ENCODE measurements at regions of chr12 and their contacts with region 1.

Region 1: DNA sequence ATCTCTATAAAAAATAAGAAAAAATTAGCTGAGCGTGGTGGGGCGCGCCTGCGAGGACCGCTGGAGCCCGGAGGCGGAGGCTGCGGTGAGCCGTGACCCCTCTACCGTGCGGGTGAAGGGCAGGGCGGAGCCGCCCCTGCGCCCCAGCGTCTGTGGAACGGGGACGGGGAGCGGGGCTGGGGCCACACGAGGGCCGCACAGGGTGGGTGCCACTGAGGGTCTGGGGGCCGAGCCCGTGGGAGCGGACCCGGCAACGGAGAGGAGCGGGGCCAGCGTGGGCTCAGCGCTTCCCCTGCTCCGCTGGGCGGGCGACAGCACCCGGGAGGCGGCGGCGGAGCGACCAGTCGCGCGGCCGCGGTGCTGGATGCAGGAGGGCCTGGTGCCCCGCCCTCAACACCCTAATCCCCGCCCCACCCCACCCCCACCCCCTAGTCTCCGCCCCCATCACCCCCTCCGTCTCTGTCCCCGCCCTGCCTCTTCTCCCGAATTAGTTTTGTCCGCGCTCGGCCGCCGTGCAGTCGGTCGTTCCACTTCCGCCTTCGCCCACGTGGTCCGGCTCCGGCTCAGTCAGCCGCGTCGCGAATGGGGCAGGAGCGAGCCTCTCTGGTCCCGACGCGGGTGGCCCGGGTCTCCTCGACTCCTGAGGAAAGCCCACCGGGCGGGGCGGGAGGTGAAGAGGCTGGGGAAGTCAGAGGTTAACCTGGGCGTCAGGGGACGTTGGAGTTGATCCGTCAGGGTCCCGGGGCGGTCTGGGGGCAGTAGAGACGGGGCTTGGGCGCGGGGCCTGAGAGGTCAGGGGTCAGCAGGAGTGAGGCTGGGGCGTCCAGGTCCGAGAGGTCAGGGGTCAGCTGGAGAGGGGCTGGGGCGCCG is at the start of gene PUS1:
- DNase-seq: peak; percentile 85 to 92
- H3K4me3 ChIP-seq: peak within 1 kb of the TSS; percentile 98
- H3K27ac ChIP-seq: peak within 1 kb of the TSS; percentile 60; the same call in 1 of the 2 replicates
- H3K4me1 ChIP-seq: peaks cover 8% of the 10 kb centered on the region
- H3K27me3 ChIP-seq: no peaks in the 10 kb centered on the region
- CTCF ChIP-seq: no peak
- total RNA-seq, gene PUS1: 36.4 and 37.0 TPM in 2 replicates

Region 2: DNA sequence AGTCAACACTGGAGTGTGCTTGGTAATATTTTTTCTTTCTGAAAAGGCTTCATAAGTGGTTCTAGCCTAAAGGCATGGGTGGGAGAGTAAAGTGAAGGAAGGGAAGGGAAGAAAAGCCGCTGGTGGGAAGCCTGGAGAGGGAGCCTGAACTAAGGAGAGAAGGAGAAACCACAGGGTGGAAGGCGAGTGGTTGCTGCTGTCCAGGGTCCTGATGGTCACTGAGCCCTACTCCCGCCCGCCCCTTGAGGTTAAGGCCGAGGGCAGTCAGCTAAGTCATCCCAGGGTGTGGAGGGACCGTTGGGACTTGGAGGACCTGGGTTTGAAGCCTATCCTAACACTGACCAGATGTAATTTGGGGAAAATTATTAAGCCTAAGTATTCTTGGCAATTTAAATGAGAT is 1402.1 kb before region 1 on chr12:
- CTCF ChIA-PET with region 1: no interaction called
- POLR2A ChIA-PET with region 1: no interaction called
- intact Hi-C with region 1: no loop called
- DNase-seq: peak in 1 of 2 experiments; percentile 14
- H3K4me3 ChIP-seq: no peak overlapping the region
- H3K27ac ChIP-seq: no peak overlapping the region
- H3K4me1 ChIP-seq: no peaks in the 10 kb centered on the region
- H3K27me3 ChIP-seq: peaks cover 14% of the 10 kb centered on the region
- CTCF ChIP-seq: no peak

Region 3: GRCh38 chr12:131825146-131825892 is 103.6 kb before region 1 on chr12:
- CTCF ChIA-PET with region 1: no interaction called
- POLR2A ChIA-PET with region 1: no interaction called
- intact Hi-C with region 1: no loop called
- DNase-seq: no peak
- H3K4me3 ChIP-seq: no peak overlapping the region
- H3K27ac ChIP-seq: no peak overlapping the region
- H3K4me1 ChIP-seq: peaks cover 7% of the 10 kb centered on the region; the same call in 1 of the 2 replicates
- H3K27me3 ChIP-seq: peaks cover 18% of the 10 kb centered on the region
- CTCF ChIP-seq: no peak

Region 4: GRCh38 chr12:131844656-131845055 is 84.3 kb before region 1 on chr12:
- CTCF ChIA-PET with region 1: no interaction called
- POLR2A ChIA-PET with region 1: no interaction called
- intact Hi-C with region 1: no loop called
- DNase-seq: no peak
- H3K4me3 ChIP-seq: no peak overlapping the region
- H3K27ac ChIP-seq: no peak overlapping the region
- H3K4me1 ChIP-seq: no peaks in the 10 kb centered on the region
- H3K27me3 ChIP-seq: peaks cover 3% of the 10 kb centered on the region; the same call in 1 of the 2 replicates
- CTCF ChIP-seq: no peak

Region 5: GRCh38 chr12:131882779-131883520 is 46.0 kb before region 1 on chr12:
- CTCF ChIA-PET with region 1: no interaction called
- POLR2A ChIA-PET with region 1: interaction called, 53 read pairs
- intact Hi-C with region 1: no loop called
- DNase-seq: peak; percentile 47 to 54
- H3K4me3 ChIP-seq: no peak overlapping the region
- H3K27ac ChIP-seq: peak overlapping the region; percentile 35; the same call in 1 of the 2 replicates
- H3K4me1 ChIP-seq: peaks cover 46% of the 10 kb centered on the region
- H3K27me3 ChIP-seq: no peaks in the 10 kb centered on the region
- CTCF ChIP-seq: no peak; the same call in 1 of the 2 replicates

Region 6: GRCh38 chr12:131949431-131950181 is 20.7 kb after region 1 on chr12 and contains the start of gene EP400:
- CTCF ChIA-PET with region 1: no interaction called
- POLR2A ChIA-PET with region 1: interaction called, 15 read pairs
- intact Hi-C with region 1: loop called (anchors 1 kb)
- DNase-seq: peak; percentile 81 to 92
- H3K4me3 ChIP-seq: peak within 1 kb of the TSS; percentile 94
- H3K27ac ChIP-seq: 0 out of 2 replicates have a peak within 1 kb of the TSS, but pooled peaks have one; percentile 15
- H3K4me1 ChIP-seq: peaks cover 7% of the 10 kb centered on the region; the same call in 1 of the 2 replicates
- H3K27me3 ChIP-seq: no peaks in the 10 kb centered on the region
- CTCF ChIP-seq: no peak; the same call in 1 of the 2 replicates
- total RNA-seq, gene EP400: 45.0 and 50.3 TPM in 2 replicates

Measured in PC-9 (cell line).